Panc1 (cell line): ENCODE measurements at regions of chr7 and their contacts with region 1.

Region 1: DNA sequence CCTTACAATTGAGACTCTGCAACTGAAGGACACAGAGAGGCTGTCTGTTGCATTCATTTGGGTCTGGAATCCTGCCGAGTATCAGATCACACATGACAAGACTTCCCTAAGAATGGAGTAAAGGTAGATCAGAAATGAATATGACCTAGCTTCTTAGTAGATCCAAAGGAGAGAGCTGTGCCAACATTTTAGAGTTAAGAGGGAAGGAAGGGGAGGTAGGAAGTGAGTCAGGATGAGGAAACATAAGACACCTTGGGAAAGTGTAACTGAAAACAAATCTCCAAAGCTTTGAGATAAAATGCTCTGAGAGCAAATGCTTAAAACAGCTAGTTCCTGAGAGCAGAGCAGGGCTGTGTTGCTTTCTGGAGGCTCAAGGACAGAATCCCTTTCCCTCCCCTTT is 6.1 kb upstream of the SLC25A13 start:
- DNase-seq: no peak
- ATAC-seq: no peak
- H3K4me3 ChIP-seq: no peak overlapping the region
- H3K27ac ChIP-seq: no peak overlapping the region
- H3K4me1 ChIP-seq: no peaks in the 10 kb centered on the region
- H3K27me3 ChIP-seq: no peaks in the 10 kb centered on the region
- CTCF ChIP-seq: no peak

Region 2: DNA sequence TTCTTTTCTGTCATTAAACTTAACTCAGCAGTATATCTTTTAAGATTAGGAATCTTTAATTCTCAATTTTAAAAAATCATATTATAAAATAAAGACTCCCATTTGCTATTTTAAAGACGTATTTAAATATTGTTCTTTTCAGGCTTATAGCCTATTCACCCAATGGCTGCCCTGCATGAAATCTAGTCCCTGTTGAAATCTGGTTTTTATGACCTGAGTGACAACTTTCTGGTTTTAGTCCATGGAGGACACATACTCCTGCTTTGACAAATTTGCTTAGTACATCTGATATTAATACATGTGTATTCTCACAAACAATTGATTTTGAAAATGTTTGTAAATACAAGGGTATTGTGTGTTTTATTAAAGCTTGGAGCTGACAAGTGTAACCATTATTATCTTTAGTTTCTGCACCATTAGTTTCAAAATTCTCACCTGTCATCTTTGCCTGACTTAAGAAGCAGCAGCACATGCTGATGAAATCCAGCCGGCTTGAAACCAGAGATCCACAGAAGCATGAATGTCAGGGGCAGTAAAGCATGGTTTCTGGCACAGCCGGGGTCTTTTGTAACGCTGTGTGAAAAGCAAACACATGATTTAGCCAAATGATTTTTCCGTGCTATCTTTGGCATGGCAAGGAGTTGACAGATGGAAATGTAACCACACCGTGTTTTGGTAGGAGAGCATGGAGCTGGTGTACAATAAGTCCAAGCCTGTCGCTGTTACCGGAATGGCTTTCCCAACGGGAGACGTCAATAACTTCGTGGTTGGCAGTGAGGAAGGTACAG is 292.9 kb before region 1 on chr7:
- CTCF ChIA-PET with region 1: no interaction called
- POLR2A ChIA-PET with region 1: no interaction called
- in situ Hi-C with region 1: no loop called
- intact Hi-C with region 1: no loop called
- DNase-seq: no peak
- ATAC-seq: no peak
- H3K4me3 ChIP-seq: no peak overlapping the region
- H3K27ac ChIP-seq: no peak overlapping the region
- H3K4me1 ChIP-seq: no peaks in the 10 kb centered on the region
- H3K27me3 ChIP-seq: peaks cover 9% of the 10 kb centered on the region
- CTCF ChIP-seq: no peak

Region 3: GRCh38 chr7:96471606-96472005 is 143.6 kb after region 1 on chr7:
- CTCF ChIA-PET with region 1: no interaction called
- POLR2A ChIA-PET with region 1: no interaction called
- in situ Hi-C with region 1: no loop called
- intact Hi-C with region 1: no loop called
- DNase-seq: no peak
- ATAC-seq: no peak
- H3K4me3 ChIP-seq: no peak overlapping the region
- H3K27ac ChIP-seq: no peak overlapping the region
- H3K4me1 ChIP-seq: no peaks in the 10 kb centered on the region
- H3K27me3 ChIP-seq: peaks cover 9% of the 10 kb centered on the region
- CTCF ChIP-seq: no peak

Region 4: DNA sequence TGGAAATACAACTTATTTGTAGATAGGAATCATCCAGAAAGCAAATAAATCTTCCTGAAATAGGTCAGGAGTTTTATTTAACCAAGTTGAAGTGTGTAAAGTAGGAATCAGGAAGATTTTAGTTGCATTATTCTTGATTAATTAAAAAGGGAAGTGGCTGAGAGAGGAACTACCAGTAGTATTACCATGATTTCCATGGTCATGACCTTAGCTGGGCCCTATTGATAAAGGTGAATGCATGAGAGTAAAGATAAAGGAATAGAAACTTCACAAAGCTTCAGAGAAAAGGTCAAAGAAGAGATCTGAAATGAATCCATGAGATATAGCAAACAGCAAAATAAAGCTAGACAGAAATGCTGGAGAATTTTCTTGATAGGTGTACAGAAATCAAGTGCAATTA is 631.1 kb after region 1 on chr7:
- CTCF ChIA-PET with region 1: no interaction called
- POLR2A ChIA-PET with region 1: interaction called, 12 read pairs
- in situ Hi-C with region 1: no loop called
- intact Hi-C with region 1: no loop called
- DNase-seq: no peak
- ATAC-seq: no peak
- H3K4me3 ChIP-seq: no peak overlapping the region
- H3K27ac ChIP-seq: no peak overlapping the region
- H3K4me1 ChIP-seq: no peaks in the 10 kb centered on the region
- H3K27me3 ChIP-seq: no peaks in the 10 kb centered on the region
- CTCF ChIP-seq: no peak

Region 5: GRCh38 chr7:97039374-97040065 is 711.5 kb after region 1 on chr7:
- CTCF ChIA-PET with region 1: no interaction called
- POLR2A ChIA-PET with region 1: interaction called, 10 read pairs
- in situ Hi-C with region 1: no loop called
- intact Hi-C with region 1: no loop called
- DNase-seq: no peak
- ATAC-seq: no peak
- H3K4me3 ChIP-seq: no peak overlapping the region
- H3K27ac ChIP-seq: no peak overlapping the region
- H3K4me1 ChIP-seq: no peaks in the 10 kb centered on the region; the same call in 1 of the 2 replicates
- H3K27me3 ChIP-seq: peaks cover 16% of the 10 kb centered on the region
- CTCF ChIP-seq: no peak